ENCODE measurements at regions of chr5 and their contacts with region 1.

Region 1: GRCh38 chr5:80093796-80094195 is 58.6 kb downstream of the THBS4 start:
- DNase-seq: no peak
- H3K4me3 ChIP-seq: no peak overlapping the region
- H3K27ac ChIP-seq: no peak overlapping the region
- H3K4me1 ChIP-seq: peaks cover 0 to 5% (median 1%) of the 10 kb centered on the region in 4 donors
- H3K27me3 ChIP-seq: no peaks in the 10 kb centered on the region
- CTCF ChIP-seq: no peak
- EP300 ChIP-seq: no peak
- POLR2A ChIP-seq: no peak

Region 2: DNA sequence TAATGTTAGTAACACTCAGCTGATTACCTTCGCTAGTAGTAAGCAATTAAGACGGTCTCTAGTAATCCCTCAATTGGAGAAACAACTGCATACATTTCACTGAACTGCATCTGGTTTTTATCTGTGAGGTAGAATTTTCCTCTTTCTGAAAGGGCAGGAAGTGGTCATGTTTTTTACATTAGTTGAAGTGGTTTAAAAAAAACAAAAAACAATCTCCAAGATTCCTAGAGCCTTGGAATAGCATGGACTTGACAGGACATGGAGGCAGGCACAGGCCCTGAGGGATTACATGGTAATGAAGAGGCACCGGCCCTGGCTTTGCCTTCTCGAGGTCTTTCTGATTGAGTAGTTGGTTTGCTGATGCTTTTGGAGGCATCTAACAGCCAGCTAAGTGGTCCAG is 32.8 kb before region 1 on chr5:
- in situ Hi-C with region 1: no loop called
- intact Hi-C with region 1: no loop called
- DNase-seq: no peak
- H3K4me3 ChIP-seq: no peak overlapping the region
- H3K27ac ChIP-seq: no peak overlapping the region
- H3K4me1 ChIP-seq: no peaks in the 10 kb centered on the region
- H3K27me3 ChIP-seq: no peaks in the 10 kb centered on the region
- CTCF ChIP-seq: no peak
- EP300 ChIP-seq: no peak
- POLR2A ChIP-seq: no peak

Region 3: GRCh38 chr5:80275347-80275746 is 181.6 kb after region 1 on chr5:
- in situ Hi-C with region 1: no loop called
- intact Hi-C with region 1: loop called (anchors 10 kb)
- DNase-seq: no peak
- H3K4me3 ChIP-seq: no peak overlapping the region
- H3K27ac ChIP-seq: no peak overlapping the region
- H3K4me1 ChIP-seq: peaks cover 0 to 2% (median 0%) of the 10 kb centered on the region in 4 donors
- H3K27me3 ChIP-seq: no peaks in the 10 kb centered on the region
- CTCF ChIP-seq: peak in 4 of 5 experiments; percentile 21 to 44 (median 24)
- EP300 ChIP-seq: no peak
- POLR2A ChIP-seq: no peak

Region 4: GRCh38 chr5:80296121-80296520 is 202.3 kb after region 1 on chr5:
- in situ Hi-C with region 1: loop called in 3 of 4 experiments (anchors 5 to 10 kb)
- intact Hi-C with region 1: no loop called
- DNase-seq: no peak
- H3K4me3 ChIP-seq: no peak overlapping the region
- H3K27ac ChIP-seq: no peak overlapping the region
- H3K4me1 ChIP-seq: no peaks in the 10 kb centered on the region
- H3K27me3 ChIP-seq: no peaks in the 10 kb centered on the region
- CTCF ChIP-seq: no peak
- EP300 ChIP-seq: no peak
- POLR2A ChIP-seq: no peak

Region 5: GRCh38 chr5:80308526-80308925 is 214.7 kb after region 1 on chr5:
- in situ Hi-C with region 1: loop called in 3 of 4 experiments (anchors 5 to 10 kb)
- intact Hi-C with region 1: loop called (anchors 2 kb)
- DNase-seq: no peak
- H3K4me3 ChIP-seq: no peak overlapping the region
- H3K27ac ChIP-seq: no peak overlapping the region
- H3K4me1 ChIP-seq: peaks cover 0 to 3% (median 0%) of the 10 kb centered on the region in 4 donors
- H3K27me3 ChIP-seq: no peaks in the 10 kb centered on the region
- CTCF ChIP-seq: no peak
- EP300 ChIP-seq: no peak
- POLR2A ChIP-seq: no peak

Measured in transverse colon (tissue), 4 donors.